Sigmoid colon (tissue), 7 donors: ENCODE measurements at regions of chr3 and their contacts with region 1.

Region 1: GRCh38 chr3:27319847-27320526 is 49.2 kb downstream of the NEK10 start:
- DNase-seq: peak; percentile 91
- H3K4me3 ChIP-seq: no peak overlapping the region
- H3K27ac ChIP-seq: peak overlapping the region; percentile 71 to 87 (median 80)
- H3K4me1 ChIP-seq: peaks cover 0 to 71% (median 44%) of the 10 kb centered on the region in 4 donors
- H3K27me3 ChIP-seq: no peaks in the 10 kb centered on the region
- CTCF ChIP-seq: no peak
- EP300 ChIP-seq: peak in 3 of 4 donors; percentile 38 to 92 (median 65)
- POLR2A ChIP-seq: no peak

Region 2: DNA sequence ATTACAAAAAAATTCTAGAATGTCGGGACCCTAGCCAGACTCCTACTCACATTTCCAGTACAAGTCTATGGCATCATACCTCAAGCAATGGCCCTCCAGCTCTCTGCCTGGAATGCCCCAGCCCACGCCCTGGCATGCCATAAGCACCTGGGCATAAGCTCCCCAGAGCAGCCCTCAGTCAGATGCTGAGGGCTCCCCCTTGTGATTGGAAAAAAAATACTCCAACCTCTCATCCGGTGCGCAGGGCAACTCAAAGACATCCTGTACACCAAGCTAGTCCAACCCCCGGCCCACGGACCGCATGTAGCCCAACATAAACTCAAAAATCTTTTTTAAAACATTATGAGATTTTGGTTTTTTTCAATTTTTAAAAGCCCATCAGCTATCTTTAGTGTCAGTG is 66.2 kb before region 1 on chr3:
- intact Hi-C with region 1: no loop called
- DNase-seq: no peak
- H3K4me3 ChIP-seq: no peak overlapping the region
- H3K27ac ChIP-seq: no peak overlapping the region
- H3K4me1 ChIP-seq: no peaks in the 10 kb centered on the region
- H3K27me3 ChIP-seq: no peaks in the 10 kb centered on the region
- CTCF ChIP-seq: no peak
- EP300 ChIP-seq: no peak
- POLR2A ChIP-seq: no peak

Region 3: DNA sequence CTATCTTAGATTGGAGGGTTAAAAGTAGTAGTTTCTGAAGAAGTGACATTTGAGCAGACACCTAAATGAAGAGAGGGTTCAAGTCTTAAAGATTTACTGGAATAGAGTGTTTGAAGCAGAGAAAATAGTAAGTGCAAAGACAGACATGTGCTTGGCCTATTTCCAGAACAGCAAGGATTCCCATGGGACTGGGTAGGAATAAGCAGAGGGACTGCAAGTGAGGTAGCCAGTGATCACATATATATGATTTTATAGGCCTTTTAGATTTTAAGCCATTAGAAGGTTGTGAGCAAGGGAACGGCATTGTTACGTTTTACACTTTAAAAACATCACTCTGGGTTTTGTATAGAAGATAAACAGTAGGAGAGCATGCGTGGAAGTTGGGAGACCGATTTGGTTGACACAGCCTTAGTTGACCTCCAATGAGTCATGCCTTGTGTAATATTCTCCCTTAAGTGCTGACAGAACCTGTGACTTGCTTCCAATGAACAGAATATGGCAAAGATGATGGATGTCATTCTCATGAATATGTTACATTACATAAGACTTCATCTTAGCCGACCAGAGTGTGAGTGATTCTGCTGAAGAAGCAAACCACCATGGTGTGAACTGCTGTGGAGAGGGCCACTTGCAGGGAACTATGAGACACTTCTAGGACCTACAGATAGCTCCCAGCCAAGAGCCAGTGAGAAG is 201.3 kb after region 1 on chr3:
- intact Hi-C with region 1: loop called (anchors 5 kb)
- DNase-seq: peak; percentile 76
- H3K4me3 ChIP-seq: no peak overlapping the region
- H3K27ac ChIP-seq: peak overlapping the region; percentile 28 to 83 (median 76)
- H3K4me1 ChIP-seq: peaks cover 0 to 41% (median 38%) of the 10 kb centered on the region in 4 donors
- H3K27me3 ChIP-seq: no peaks in the 10 kb centered on the region
- CTCF ChIP-seq: no peak
- EP300 ChIP-seq: peak in 3 of 4 donors; percentile 29 to 90 (median 75)
- POLR2A ChIP-seq: no peak

Region 4: DNA sequence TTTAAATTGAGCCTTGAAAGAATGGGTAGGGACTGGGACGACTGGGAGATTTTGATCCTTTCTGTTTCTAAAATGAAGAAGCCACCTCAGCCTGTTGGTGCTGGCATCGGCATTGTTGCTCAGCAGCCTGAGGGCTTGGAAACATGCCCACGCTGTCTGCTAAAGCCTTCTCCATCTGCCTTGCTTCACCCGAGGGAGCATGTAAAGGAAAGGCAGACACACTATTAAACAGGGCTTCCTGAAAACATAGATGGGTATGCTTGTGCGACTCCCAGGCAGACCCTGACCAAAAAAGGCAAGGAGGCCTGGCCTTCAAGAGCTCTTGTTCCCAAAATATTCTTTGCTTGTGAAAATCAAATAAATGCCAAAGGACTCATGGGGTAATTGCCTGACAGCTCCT is 248.4 kb after region 1 on chr3:
- intact Hi-C with region 1: loop called (anchors 5 kb)
- DNase-seq: peak; percentile 95
- H3K4me3 ChIP-seq: peak overlapping the region in 1 of 4 donors; percentile 3
- H3K27ac ChIP-seq: peak overlapping the region in 3 of 4 donors; percentile 74 to 83 (median 83)
- H3K4me1 ChIP-seq: peaks cover 0 to 46% (median 42%) of the 10 kb centered on the region in 4 donors
- H3K27me3 ChIP-seq: no peaks in the 10 kb centered on the region
- CTCF ChIP-seq: no peak
- EP300 ChIP-seq: peak; percentile 64 to 83 (median 76)
- POLR2A ChIP-seq: no peak